ENCODE measurements at regions of chr11 and their contacts with region 1.

Region 1: GRCh38 chr11:67382276-67383136 is 9.1 kb upstream of the CLCF1 start:
- DNase-seq: peak; percentile 84 to 92
- ATAC-seq: peak; percentile 94
- H3K4me3 ChIP-seq: no peak overlapping the region
- H3K27ac ChIP-seq: no peak overlapping the region
- H3K4me1 ChIP-seq: no peaks in the 10 kb centered on the region
- H3K27me3 ChIP-seq: no peaks in the 10 kb centered on the region

Region 2: GRCh38 chr11:67265633-67266423 is 116.7 kb before region 1 on chr11:
- intact Hi-C with region 1: loop called (anchors 5 kb)
- DNase-seq: peak; percentile 84 to 94
- ATAC-seq: peak; percentile 76
- H3K4me3 ChIP-seq: peak overlapping the region in 1 of 2 donors; percentile 81
- H3K27ac ChIP-seq: peak overlapping the region in 1 of 2 donors; percentile 58
- H3K4me1 ChIP-seq: no peaks in the 10 kb centered on the region
- H3K27me3 ChIP-seq: no peaks in the 10 kb centered on the region

Region 3: DNA sequence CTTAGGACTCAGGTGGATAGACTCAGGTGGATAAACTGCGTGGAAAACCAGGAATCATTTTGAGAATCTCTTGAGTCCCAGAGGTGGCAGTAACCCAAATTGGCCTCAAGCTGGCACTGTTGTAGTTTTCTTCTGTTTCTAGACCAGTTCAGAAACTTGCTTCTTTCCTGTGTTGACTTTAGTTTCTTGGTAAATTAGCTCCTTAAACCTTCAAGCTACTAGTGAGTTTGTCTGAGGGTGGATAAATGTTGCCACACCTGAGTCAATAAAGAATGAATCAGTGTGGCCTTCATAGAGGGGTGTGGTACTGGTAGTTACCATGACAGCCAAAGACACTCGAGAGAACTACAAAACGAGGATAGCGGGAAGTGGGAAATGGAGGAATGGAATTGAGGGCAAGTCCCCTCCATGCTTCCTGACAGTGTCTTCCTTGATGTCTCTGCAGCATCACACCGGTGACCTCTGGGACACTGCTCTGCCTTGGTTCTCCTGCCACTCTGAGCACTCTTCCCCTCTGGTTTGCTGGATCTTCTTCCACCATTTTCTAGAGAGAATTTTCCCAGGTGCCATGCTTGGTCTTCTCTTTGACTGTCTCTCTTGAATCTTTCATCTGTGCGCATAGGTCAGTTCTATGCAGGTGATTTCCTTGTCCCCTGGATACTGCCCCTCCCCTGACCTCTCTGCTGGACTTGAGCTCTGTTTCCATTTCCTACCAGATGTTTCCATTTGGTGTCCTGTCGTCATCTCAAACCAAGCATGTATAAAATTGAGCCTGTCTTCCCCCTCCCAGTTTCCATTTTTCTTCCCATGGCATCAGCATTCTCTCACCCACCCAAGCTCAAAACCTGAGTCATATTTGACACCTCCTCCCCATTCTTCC is 36.3 kb before region 1 on chr11:
- intact Hi-C with region 1: loop called (anchors 5 kb)
- DNase-seq: no peak
- ATAC-seq: no peak
- H3K4me3 ChIP-seq: no peak overlapping the region
- H3K27ac ChIP-seq: no peak overlapping the region
- H3K4me1 ChIP-seq: peaks cover 0 to 2% of the 10 kb centered on the region in 2 donors
- H3K27me3 ChIP-seq: no peaks in the 10 kb centered on the region

Region 4: GRCh38 chr11:67353317-67354074 is 29.0 kb before region 1 on chr11 and contains the start of gene POLD4:
- intact Hi-C with region 1: loop called (anchors 2 kb)
- DNase-seq: peak; percentile 99 to 100
- ATAC-seq: peak; percentile 93
- H3K4me3 ChIP-seq: peak within 1 kb of the TSS; percentile 36 to 37
- H3K27ac ChIP-seq: peak within 1 kb of the TSS; percentile 67 to 92
- H3K4me1 ChIP-seq: peaks cover 6 to 10% of the 10 kb centered on the region in 2 donors
- H3K27me3 ChIP-seq: no peaks in the 10 kb centered on the region
- total RNA-seq, gene POLD4: 82.7 to 85.1 TPM

Region 5: DNA sequence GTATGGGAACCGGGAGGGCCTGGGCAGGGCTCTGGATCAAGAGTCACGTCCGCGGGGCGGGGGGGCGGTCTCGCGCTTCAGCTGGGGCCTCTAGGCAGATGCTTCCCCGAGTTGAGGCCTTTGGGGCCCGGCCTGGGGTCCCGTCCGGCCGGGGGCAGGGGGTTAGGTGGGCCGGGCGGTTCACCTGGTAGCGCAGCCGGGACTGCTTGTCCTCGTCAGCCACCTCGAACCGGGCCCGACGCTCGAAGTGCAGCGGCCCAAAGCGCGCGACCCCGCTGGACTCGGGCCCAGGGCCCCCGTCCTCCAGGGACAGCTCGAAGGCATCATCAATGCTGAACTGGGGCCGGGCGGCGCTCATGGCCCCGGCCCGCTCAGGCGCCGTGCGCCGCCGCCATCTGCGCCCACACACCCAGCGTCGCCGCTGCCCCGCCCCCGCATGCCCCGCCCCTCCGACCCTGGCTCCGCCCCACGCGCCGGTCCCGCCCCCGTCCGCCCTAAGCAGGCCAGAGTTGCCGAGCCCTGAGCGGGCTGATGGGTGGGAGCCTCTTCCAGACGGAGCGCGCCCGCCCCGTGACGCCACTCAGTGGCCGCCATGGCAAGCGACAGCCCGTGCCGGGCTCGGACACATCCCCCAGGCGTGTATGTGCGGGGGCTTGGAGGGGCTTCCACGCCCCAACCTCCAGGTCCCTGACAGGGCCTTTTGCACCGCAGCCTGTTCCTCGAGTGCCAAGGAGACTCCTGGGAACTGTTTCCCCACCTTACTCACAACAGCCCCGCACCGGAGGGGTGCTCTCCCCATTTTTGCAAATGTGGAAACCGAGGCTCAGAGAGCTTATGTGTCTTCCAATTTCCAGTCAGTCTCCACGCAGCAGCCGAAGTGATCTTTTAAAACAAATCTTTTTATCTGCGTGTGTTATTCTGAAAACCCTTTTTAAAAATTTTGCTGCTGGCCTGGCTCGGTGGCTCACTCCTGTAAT is 86.6 kb after region 1 on chr11 and contains the start of gene TMEM134:
- intact Hi-C with region 1: no loop called
- DNase-seq: peak; percentile 96 to 98
- ATAC-seq: peak; percentile 95
- H3K4me3 ChIP-seq: peak within 1 kb of the TSS; percentile 74 to 90
- H3K27ac ChIP-seq: peak within 1 kb of the TSS; percentile 29 to 46
- H3K4me1 ChIP-seq: no peaks in the 10 kb centered on the region
- H3K27me3 ChIP-seq: no peaks in the 10 kb centered on the region
- total RNA-seq, gene TMEM134: 34.1 to 37.6 TPM

Region 6: DNA sequence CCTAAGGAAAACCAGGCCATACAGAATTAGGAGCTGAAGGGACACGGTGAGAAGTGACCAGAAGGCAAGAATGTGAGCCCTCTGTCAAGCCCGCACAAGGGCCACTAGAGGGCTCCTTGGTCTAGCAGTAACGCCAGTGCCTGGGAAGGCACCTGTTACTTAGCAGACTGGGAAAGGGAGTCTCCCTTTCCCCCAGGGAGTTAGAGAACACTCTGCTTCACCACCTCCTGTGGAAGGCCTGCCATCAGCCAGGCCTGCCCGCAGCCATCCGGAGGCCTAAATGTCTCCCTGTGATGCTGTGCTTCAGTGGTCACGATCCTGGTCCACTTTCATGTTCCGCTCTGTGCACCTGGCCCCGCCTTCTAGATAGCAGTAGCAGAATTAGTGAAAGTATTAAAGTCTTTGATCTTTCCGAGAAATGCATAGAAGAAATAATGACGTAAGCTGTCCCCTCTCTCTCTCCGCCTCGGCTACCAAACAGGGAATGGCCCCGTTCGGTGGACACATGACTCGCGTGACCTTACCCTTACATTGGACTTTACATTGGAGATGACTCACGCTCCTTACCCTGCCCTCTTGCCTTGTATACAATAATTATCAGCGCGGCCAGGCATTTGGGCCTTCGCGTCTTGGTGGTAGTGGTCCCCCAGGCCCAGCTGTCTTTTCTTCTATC is 190.4 kb after region 1 on chr11:
- intact Hi-C with region 1: no loop called
- DNase-seq: no peak
- ATAC-seq: no peak
- H3K4me3 ChIP-seq: no peak overlapping the region
- H3K27ac ChIP-seq: no peak overlapping the region
- H3K4me1 ChIP-seq: no peaks in the 10 kb centered on the region
- H3K27me3 ChIP-seq: no peaks in the 10 kb centered on the region

Region 7: GRCh38 chr11:67606492-67607201 is 224.1 kb after region 1 on chr11 and contains the start of gene NDUFV1:
- intact Hi-C with region 1: no loop called
- DNase-seq: peak; percentile 99
- ATAC-seq: peak; percentile 97
- H3K4me3 ChIP-seq: peak within 1 kb of the TSS; percentile 52 to 80
- H3K27ac ChIP-seq: peak within 1 kb of the TSS; percentile 15 to 45
- H3K4me1 ChIP-seq: no peaks in the 10 kb centered on the region
- H3K27me3 ChIP-seq: no peaks in the 10 kb centered on the region
- total RNA-seq, gene NDUFV1: 113 to 123 TPM

Measured in aorta (tissue), 5 donors.